ENCODE measurements at regions of chr1 and their contacts with region 1.

Region 1: DNA sequence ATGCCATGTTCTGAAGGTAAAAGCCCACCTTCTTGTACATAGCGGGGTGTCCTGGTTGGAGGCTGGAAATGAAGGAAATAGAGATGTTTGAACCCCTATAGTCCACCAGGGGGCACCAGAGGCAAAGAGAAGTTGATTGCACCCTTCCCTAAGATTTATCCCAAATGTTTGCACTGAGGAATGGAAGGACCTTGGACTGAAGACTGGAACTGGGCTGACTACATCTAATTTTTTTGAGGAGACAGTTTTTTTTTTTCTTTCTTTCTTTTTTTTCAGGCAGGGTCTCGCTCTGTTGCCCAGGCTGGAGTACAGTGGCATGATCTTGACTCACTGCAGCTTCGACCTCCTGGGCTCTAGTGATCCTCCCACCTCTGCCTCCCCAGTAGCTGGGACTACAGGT is 55.3 kb upstream of the EIF4G3 start:
- DNase-seq: peak; percentile 43
- H3K4me3 Mint-ChIP-seq: no peak overlapping the region
- H3K27ac Mint-ChIP-seq: peak overlapping the region; percentile 42
- H3K4me1 Mint-ChIP-seq: no peaks in the 10 kb centered on the region
- H3K27me3 Mint-ChIP-seq: no peaks in the 10 kb centered on the region

Region 2: DNA sequence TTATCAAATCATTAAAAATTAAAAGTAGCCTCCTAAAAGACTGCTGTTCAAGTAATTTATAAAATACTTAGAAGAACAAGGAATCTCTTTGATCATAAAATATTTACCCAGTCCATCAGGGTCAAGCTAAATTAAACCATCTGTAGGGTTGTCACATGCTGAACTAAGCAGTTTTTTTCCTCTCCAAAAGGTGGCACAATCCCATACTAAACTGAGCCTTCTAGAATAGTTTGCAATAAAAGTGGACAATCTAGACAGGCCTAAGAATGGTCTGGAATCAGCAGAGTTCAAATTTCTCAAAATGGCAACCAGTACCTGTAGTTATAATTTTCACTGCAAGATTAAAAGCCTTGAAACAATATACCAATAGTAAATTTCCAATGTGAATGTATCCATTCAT is 250.1 kb before region 1 on chr1:
- CTCF ChIA-PET with region 1: no interaction called
- DNase-seq: no peak
- H3K4me3 Mint-ChIP-seq: no peak overlapping the region
- H3K27ac Mint-ChIP-seq: no peak overlapping the region
- H3K4me1 Mint-ChIP-seq: no peaks in the 10 kb centered on the region
- H3K27me3 Mint-ChIP-seq: no peaks in the 10 kb centered on the region

Region 3: GRCh38 chr1:21117597-21118001 is 114.4 kb before region 1 on chr1:
- CTCF ChIA-PET with region 1: no interaction called
- DNase-seq: no peak
- H3K4me3 Mint-ChIP-seq: no peak overlapping the region
- H3K27ac Mint-ChIP-seq: no peak overlapping the region
- H3K4me1 Mint-ChIP-seq: no peaks in the 10 kb centered on the region
- H3K27me3 Mint-ChIP-seq: no peaks in the 10 kb centered on the region

Region 4: DNA sequence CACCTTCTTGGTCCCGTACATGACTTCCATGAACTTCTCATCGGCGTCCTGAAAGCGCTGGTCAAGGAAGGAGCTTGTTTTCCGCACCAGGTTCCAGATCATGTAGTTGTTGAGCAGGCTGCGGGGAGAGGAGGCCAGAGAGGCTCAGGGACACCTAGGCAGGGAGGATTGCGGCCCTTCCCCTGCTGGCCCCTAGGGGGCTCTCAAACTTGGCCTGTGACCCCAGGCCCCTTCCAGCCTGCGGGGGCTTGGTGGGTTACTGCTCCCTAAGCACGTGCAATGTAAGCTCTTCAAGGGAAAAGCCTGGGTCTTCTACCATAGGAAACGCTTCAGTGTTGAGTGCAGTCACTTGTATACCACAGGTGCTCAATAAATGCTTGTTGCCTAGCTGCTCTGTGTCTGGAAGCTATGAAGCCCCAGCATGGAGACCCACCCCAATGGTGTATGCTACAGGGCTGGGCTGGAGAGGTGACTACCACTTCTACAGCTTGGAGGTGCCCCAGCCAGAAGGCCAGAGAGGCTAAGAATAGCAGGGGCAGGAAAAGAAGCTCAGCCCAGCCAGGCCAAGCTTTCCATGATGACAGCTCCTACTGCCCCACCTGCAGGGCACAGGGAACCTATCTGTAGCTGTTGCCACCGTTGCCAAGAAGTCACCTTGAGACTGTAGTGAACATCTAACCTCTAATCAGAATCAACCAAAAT is 13.1 kb after region 1 on chr1:
- CTCF ChIA-PET with region 1: interaction called, 46 read pairs
- DNase-seq: no peak
- H3K4me3 Mint-ChIP-seq: no peak overlapping the region
- H3K27ac Mint-ChIP-seq: no peak overlapping the region
- H3K4me1 Mint-ChIP-seq: no peaks in the 10 kb centered on the region
- H3K27me3 Mint-ChIP-seq: no peaks in the 10 kb centered on the region

Region 5: GRCh38 chr1:21324368-21325141 is 92.5 kb after region 1 on chr1:
- CTCF ChIA-PET with region 1: no interaction called
- DNase-seq: peak; percentile 65
- H3K4me3 Mint-ChIP-seq: peak overlapping the region; percentile 45
- H3K27ac Mint-ChIP-seq: peak overlapping the region; percentile 92
- H3K4me1 Mint-ChIP-seq: peaks cover 81% of the 10 kb centered on the region
- H3K27me3 Mint-ChIP-seq: no peaks in the 10 kb centered on the region

Measured in activated naive CD4-positive, alpha-beta T cell treated with anti-CD3 and anti-CD28 coated beads, Interleukin-2, amount 10 ng/mL, durations not matched to agents 7 days and 5 days (primary cell).